ENCODE measurements at regions of chr6 and their contacts with region 1.

Region 1: GRCh38 chr6:125114248-125114858 is 39.2 kb upstream of the TPD52L1 start:
- DNase-seq: peak in 1 of 2 donors; percentile 41
- ATAC-seq: no peak
- H3K4me3 ChIP-seq: no peak overlapping the region
- H3K27ac ChIP-seq: no peak overlapping the region
- H3K4me1 ChIP-seq: no peaks in the 10 kb centered on the region
- H3K27me3 ChIP-seq: no peaks in the 10 kb centered on the region
- CTCF ChIP-seq: peak; percentile 58 to 93 (median 84)
- POLR2A ChIP-seq: no peak

Region 2: DNA sequence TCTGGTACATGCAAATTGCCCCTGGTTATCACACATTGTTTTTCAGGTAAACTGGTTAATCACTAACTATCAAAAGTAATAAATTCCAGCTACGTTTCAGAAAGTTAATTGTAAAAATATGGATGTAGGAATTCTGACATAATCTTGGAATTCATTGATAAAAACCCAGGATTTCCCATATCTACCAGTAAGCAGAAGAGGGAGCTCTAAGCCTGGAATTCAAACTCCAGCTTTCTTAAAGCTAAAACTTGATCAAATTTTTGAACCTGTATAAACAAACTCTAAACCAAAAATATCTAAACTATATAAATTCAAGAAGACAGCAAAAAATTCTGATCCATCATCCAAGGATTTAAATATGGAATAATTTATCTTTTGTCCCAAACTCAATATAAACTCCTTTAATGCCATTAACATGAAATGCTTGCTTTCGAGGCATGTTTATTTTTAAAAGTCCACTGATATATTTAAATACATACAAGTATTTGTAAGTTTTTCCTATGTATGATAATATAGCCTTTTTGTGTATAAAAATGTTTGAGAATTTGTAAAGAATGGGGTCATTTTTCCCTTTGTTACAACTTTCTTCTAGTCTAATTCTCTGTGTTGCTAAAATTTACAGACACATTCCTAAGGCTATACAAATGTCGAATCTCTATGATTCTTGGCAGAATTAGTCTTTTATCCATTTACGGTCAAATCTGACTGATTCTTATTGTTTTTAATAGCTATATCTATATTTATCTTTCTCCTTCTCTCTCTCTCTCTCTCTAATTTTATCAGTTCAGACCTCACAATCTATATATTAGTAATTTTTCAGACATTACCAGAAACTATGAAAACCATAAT is 243.5 kb before region 1 on chr6:
- in situ Hi-C with region 1: loop called (anchors 5 to 10 kb)
- intact Hi-C with region 1: loop called (anchors 2 kb)
- DNase-seq: no peak
- ATAC-seq: no peak
- H3K4me3 ChIP-seq: no peak overlapping the region
- H3K27ac ChIP-seq: no peak overlapping the region
- H3K4me1 ChIP-seq: no peaks in the 10 kb centered on the region
- H3K27me3 ChIP-seq: no peaks in the 10 kb centered on the region
- CTCF ChIP-seq: peak; percentile 38 to 72 (median 60)
- POLR2A ChIP-seq: no peak

Region 3: GRCh38 chr6:124961777-124962611 is 152.4 kb before region 1 on chr6 and contains the start of gene RNF217:
- in situ Hi-C with region 1: loop called in 1 of 4 experiments (anchors 10 kb)
- intact Hi-C with region 1: loop called (anchors 2 kb)
- DNase-seq: peak; percentile 29 to 59
- ATAC-seq: peak; percentile 34 to 39
- H3K4me3 ChIP-seq: peak within 1 kb of the TSS; percentile 72 to 87 (median 81)
- H3K27ac ChIP-seq: peak within 1 kb of the TSS; percentile 83 to 92 (median 90)
- H3K4me1 ChIP-seq: peaks cover 34 to 43% of the 10 kb centered on the region in 2 donors
- H3K27me3 ChIP-seq: no peaks in the 10 kb centered on the region
- CTCF ChIP-seq: peak in 1 of 5 experiments; percentile 10
- POLR2A ChIP-seq: peak; percentile 50 to 54
- total RNA-seq, gene RNF217: 4.5 to 15.5 (median 12.4) TPM

Region 4: GRCh38 chr6:125073071-125073470 is 41.3 kb before region 1 on chr6:
- in situ Hi-C with region 1: loop called in 1 of 4 experiments (anchors 5 kb)
- intact Hi-C with region 1: no loop called
- DNase-seq: no peak
- ATAC-seq: no peak
- H3K4me3 ChIP-seq: no peak overlapping the region
- H3K27ac ChIP-seq: no peak overlapping the region
- H3K4me1 ChIP-seq: peaks cover 0 to 3% of the 10 kb centered on the region in 2 donors
- H3K27me3 ChIP-seq: no peaks in the 10 kb centered on the region
- CTCF ChIP-seq: no peak
- POLR2A ChIP-seq: no peak

Region 5: DNA sequence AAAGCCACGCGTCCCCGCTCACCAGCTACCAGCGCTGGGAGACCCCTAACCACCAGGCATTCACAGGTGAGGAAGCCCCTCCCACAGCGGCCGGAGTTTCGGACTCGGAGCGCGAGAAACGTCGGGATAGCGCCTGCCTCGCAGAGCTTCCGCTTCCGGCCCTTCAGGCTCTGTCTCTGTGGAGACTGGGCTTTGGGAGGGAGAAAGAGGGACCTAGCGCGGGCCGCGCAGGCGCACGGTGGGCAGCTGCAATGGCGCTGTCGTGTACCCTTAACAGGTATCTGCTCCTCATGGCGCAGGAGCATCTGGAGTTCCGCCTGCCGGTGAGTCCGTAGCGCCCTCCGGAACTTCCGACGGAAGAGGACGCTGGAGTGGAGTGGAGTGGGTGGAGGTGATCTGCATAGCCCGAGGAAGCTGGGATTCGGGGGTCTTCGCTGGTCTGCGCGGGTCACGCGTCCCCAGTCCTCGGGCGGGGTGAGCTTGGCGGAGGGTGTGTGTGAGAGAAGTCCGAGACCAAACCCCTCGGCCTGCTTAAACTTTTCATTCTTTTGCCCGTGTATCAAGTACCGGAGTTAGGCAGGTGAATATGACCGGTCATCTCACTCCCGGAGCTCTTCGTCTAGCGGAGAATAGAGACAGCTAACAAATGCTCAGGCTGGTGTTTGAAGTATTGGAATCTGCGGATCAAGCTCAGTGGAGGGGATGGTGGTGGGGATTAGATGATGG is 872.1 kb after region 1 on chr6 and contains the start of gene TRMT11:
- in situ Hi-C with region 1: no loop called
- intact Hi-C with region 1: no loop called
- DNase-seq: peak; percentile 73 to 85
- ATAC-seq: peak; percentile 95 to 97
- H3K4me3 ChIP-seq: peak within 1 kb of the TSS; percentile 64 to 96 (median 92)
- H3K27ac ChIP-seq: peak within 1 kb of the TSS; percentile 71 to 82 (median 80)
- H3K4me1 ChIP-seq: peaks cover 3 to 12% of the 10 kb centered on the region in 2 donors
- H3K27me3 ChIP-seq: no peaks in the 10 kb centered on the region
- CTCF ChIP-seq: no peak
- POLR2A ChIP-seq: peak; percentile 44
- total RNA-seq, gene TRMT11: 2.5 to 10.2 (median 6.9) TPM